HCT116 (cell line): ENCODE measurements at regions of chr14 and their contacts with region 1.

Region 1: GRCh38 chr14:67666750-67667449 is 7.5 kb downstream of the VTI1B start:
- DNase-seq: peak; percentile 45
- ATAC-seq: peak; percentile 90
- H3K4me3 ChIP-seq: no peak overlapping the region
- H3K27ac ChIP-seq: no peak overlapping the region
- H3K4me1 ChIP-seq: no peaks in the 10 kb centered on the region
- H3K27me3 ChIP-seq: no peaks in the 10 kb centered on the region
- CTCF ChIP-seq: peak; percentile 51 to 86 (median 76)
- POLR2A ChIP-seq: no peak
- RAD21 ChIP-seq: peak; percentile 92

Region 2: DNA sequence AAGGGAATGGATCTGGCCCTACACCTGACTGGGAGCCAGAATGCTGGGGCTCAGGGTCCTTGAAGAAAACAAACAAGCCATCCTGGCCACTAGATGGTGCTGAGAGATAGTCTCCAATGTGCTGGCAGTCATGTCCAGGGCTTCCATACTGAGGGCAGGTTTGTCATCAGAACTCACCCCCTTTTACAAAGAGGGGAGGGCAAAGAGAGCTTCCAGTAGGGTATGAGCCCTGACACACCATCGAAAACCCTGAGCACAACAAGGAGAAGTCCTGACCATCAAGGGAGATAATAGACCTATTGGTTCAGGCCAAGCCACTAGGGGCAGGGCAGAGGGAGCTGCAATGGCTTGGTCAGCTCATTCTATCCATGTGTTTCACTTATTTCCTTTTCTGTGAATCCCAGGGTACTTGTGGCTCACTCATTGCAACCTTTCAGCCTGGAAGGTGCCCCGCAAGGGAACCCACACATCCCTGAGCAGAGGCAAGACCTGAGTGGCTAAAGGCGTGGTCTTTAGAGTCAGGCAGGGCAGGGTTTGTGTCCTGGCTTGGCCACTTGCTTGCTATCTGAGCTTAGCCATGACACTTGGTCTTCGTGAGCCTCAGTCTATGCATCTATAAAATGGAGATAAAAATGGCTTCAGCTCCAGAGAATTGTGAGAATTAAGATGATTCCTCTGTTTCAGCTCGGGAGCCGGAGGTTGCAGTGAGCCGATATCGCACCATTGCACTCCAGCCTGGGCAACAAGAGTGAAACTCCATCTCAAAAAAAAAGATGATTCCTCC is 140.0 kb before region 1 on chr14:
- CTCF ChIA-PET with region 1: interaction called, 17 read pairs
- POLR2A ChIA-PET with region 1: no interaction called
- RAD21 ChIA-PET with region 1: interaction called in 1 of 2 experiments, 5 read pairs
- intact Hi-C with region 1: loop called (anchors 2 kb)
- DNase-seq: peak; percentile 59
- ATAC-seq: peak; percentile 93
- H3K4me3 ChIP-seq: no peak overlapping the region
- H3K27ac ChIP-seq: no peak overlapping the region
- H3K4me1 ChIP-seq: peaks cover 0 to 11% of the 10 kb centered on the region in 2 experiments; a peak in 2 of 4 replicates
- H3K27me3 ChIP-seq: peaks cover 22% of the 10 kb centered on the region; the same call in 1 of the 2 replicates
- CTCF ChIP-seq: peak; percentile 81 to 98 (median 98)
- POLR2A ChIP-seq: no peak
- RAD21 ChIP-seq: peak; percentile 84

Region 3: GRCh38 chr14:67583711-67584644 is 82.9 kb before region 1 on chr14:
- CTCF ChIA-PET with region 1: interaction called, 77 read pairs
- POLR2A ChIA-PET with region 1: interaction called, 7 read pairs
- RAD21 ChIA-PET with region 1: interaction called, 3 read pairs
- intact Hi-C with region 1: loop called (anchors 1 kb)
- DNase-seq: peak; percentile 47
- ATAC-seq: peak; percentile 97
- H3K4me3 ChIP-seq: no peak overlapping the region
- H3K27ac ChIP-seq: no peak overlapping the region
- H3K4me1 ChIP-seq: no peaks in the 10 kb centered on the region
- H3K27me3 ChIP-seq: no peaks in the 10 kb centered on the region
- CTCF ChIP-seq: peak; percentile 79 to 85 (median 80)
- POLR2A ChIP-seq: no peak
- RAD21 ChIP-seq: peak; percentile 90

Region 4: DNA sequence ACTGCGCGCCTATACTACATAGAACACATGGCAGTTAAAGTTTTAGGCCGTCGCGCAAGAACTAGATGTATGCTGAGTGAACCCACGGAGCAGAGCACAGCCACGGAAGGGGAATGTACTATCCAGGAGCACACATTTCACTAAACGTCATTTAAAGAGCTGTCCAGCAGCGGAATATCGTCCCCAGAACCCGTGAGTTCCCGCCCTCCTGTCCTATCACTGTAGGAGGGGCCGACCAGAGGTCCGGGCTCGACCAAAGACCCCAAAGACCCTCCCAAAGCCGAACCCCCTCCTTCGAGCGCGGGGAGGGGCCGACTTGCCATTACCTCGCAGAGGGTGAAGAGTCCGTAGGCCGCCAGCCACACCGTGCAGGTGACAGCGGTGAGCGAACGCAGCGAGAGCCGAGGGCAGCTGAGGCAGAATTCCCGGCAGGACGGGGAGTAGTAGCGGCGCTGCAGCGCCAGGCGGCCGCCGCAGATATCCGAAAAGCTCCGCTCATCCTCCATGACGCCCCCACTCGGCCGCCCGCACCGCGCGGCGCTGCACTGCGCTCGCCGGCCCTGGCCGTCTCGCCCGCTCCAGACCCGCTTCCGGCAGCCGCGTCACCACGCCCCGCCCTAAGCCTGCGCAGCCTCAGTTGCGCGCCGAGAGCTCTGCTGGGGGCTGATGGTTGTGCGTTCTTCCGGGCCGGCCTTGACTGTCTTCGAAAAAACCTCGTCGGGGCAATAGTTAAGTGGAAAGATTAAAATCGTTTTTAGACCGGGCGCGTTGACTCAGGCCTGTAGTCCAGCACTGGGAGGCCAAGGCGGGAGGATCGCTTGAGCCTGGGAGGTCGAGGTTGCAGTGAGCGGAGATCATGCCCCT is 67.0 kb before region 1 on chr14 and contains the start of gene PIGH:
- CTCF ChIA-PET with region 1: interaction called, 13 read pairs
- POLR2A ChIA-PET with region 1: no interaction called
- RAD21 ChIA-PET with region 1: interaction called in 1 of 2 experiments, 6 read pairs
- intact Hi-C with region 1: no loop called
- DNase-seq: peak; percentile 69
- ATAC-seq: peak; percentile 98
- H3K4me3 ChIP-seq: peak within 1 kb of the TSS; percentile 74 to 91
- H3K27ac ChIP-seq: peak within 1 kb of the TSS; percentile 65
- H3K4me1 ChIP-seq: peaks cover 3 to 16% of the 10 kb centered on the region in 2 experiments; a peak in 2 of 4 replicates
- H3K27me3 ChIP-seq: no peaks in the 10 kb centered on the region
- CTCF ChIP-seq: peak; percentile 44 to 60 (median 49); a peak in 5 of 6 replicates
- POLR2A ChIP-seq: peak; percentile 26
- RAD21 ChIP-seq: peak; percentile 13; the same call in 1 of the 2 replicates
- total RNA-seq, gene PIGH: 20.9 TPM

Region 5: GRCh38 chr14:67619446-67620216 is 47.3 kb before region 1 on chr14 and contains the start of gene ARG2:
- CTCF ChIA-PET with region 1: interaction called, 28 read pairs
- POLR2A ChIA-PET with region 1: interaction called, 3 read pairs
- RAD21 ChIA-PET with region 1: interaction called, 4 to 11 read pairs
- intact Hi-C with region 1: loop called (anchors 1 kb)
- DNase-seq: peak; percentile 98
- ATAC-seq: peak; percentile 95
- H3K4me3 ChIP-seq: peak within 1 kb of the TSS; percentile 52 to 66
- H3K27ac ChIP-seq: no peak within 1 kb of the TSS
- H3K4me1 ChIP-seq: peaks cover 15 to 32% of the 10 kb centered on the region in 2 experiments
- H3K27me3 ChIP-seq: no peaks in the 10 kb centered on the region
- CTCF ChIP-seq: no peak
- POLR2A ChIP-seq: peak; percentile 46
- RAD21 ChIP-seq: 0 out of 2 replicates have a peak, but pooled peaks have one; percentile 34
- total RNA-seq, gene ARG2: 7.0 TPM